ENCODE measurements at regions of chr22 and their contacts with region 1.

Region 1: GRCh38 chr22:36775964-36776669 is at the start of gene IFT27:
- DNase-seq: peak; percentile 100
- H3K4me3 Mint-ChIP-seq: peak within 1 kb of the TSS; percentile 84
- H3K27ac Mint-ChIP-seq: peak within 1 kb of the TSS; percentile 79
- H3K4me1 Mint-ChIP-seq: peaks cover 6% of the 10 kb centered on the region
- H3K27me3 Mint-ChIP-seq: no peaks in the 10 kb centered on the region
- CTCF ChIP-seq: no peak
- total RNA-seq, gene IFT27: 17.6 and 28.7 TPM in 2 replicates

Region 2: GRCh38 chr22:36552289-36552688 is 223.8 kb before region 1 on chr22:
- CTCF ChIA-PET with region 1: interaction called, 80 read pairs
- POLR2A ChIA-PET with region 1: interaction called, 24 read pairs
- intact Hi-C with region 1: no loop called
- DNase-seq: no peak
- H3K4me3 Mint-ChIP-seq: no peak overlapping the region
- H3K27ac Mint-ChIP-seq: no peak overlapping the region
- H3K4me1 Mint-ChIP-seq: peaks cover 3% of the 10 kb centered on the region
- H3K27me3 Mint-ChIP-seq: peaks cover 38% of the 10 kb centered on the region
- CTCF ChIP-seq: no peak

Region 3: DNA sequence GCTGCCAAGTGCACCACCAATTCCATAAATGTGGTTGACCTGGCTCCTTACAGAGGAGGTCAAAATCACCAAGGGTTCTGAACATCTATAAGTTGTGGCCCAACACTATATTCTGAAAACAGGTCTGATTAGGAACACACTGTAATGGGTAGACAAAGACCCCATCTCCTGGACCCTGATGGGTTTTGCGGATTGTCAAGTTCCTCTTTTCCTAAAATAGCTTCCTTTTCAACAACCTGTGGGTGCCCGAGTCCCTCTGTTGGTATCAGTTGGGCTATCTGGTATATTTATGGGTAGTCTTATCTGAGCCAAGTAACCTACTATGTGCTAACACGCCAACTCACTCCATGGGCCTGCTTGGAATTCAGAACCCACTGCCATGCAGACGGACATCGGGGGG is 62.7 kb before region 1 on chr22:
- CTCF ChIA-PET with region 1: no interaction called
- POLR2A ChIA-PET with region 1: no interaction called
- intact Hi-C with region 1: no loop called
- DNase-seq: no peak
- H3K4me3 Mint-ChIP-seq: no peak overlapping the region
- H3K27ac Mint-ChIP-seq: no peak overlapping the region
- H3K4me1 Mint-ChIP-seq: no peaks in the 10 kb centered on the region
- H3K27me3 Mint-ChIP-seq: peaks cover 82% of the 10 kb centered on the region
- CTCF ChIP-seq: no peak

Region 4: DNA sequence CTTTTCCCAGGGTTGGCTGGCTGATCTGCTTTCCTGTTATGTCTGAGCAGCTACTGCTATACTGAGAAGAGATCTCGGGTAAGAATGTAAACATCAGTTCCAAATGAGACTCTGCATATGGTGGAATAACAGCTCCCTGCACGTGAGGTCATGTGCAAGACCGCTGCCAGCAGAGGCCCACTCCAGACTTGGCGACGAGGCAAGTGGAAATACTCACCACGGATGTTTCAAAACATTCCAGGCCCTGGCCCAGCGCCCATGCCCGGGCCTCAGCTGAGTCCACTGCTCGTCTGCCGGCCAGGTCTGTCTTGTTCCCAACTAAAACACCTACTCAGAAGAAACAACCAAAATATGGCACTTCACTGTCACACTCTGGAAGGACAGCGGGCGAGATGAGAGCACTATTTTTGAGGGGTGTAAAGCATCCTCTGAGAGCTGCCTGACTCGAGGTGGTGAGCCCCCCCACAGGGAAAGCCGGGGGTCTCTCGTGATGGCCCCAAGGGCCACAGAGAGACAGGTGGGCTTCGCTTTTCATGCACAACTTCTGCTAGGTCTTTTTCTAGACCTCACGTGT is 13.3 kb before region 1 on chr22:
- CTCF ChIA-PET with region 1: interaction called, 158 read pairs
- POLR2A ChIA-PET with region 1: interaction called, 69 read pairs
- intact Hi-C with region 1: loop called (anchors 1 kb)
- DNase-seq: peak; percentile 54
- H3K4me3 Mint-ChIP-seq: peak overlapping the region; percentile 12
- H3K27ac Mint-ChIP-seq: peak overlapping the region; percentile 52
- H3K4me1 Mint-ChIP-seq: peaks cover 29% of the 10 kb centered on the region
- H3K27me3 Mint-ChIP-seq: no peaks in the 10 kb centered on the region
- CTCF ChIP-seq: no peak